Left colon (tissue), 2 donors: ENCODE measurements at regions of chr1 and their contacts with region 1.

Region 1: DNA sequence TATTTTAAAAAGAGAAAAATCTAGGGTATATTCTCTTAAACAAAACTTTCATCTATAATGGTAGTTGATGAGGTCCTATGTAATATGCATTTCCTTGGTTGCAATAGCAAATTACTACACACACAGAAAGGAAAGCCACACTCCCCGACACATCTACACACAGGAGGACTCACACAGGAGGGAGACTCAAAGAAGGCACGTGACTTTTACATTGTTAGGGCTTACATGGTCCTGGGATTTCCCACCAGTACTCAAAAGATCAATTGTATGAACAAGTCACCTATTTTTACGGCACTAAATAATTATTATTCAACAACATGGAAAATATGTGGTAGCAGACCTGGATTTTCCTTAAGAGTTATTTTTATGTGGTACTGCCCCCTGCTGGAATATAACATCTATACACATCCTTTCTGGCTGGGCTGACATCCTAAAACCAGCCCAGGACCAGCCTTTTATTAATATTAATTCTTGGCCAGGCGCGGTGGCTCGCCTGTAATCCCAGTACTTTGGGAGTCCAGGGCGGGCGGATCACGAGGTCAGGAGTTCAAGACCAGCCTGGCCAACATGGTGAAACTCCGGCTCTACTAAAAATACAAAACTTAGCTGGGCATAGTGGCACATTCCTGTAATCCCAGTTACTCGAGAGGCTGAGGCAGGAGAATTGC is 33.9 kb upstream of the LGALS8 start:
- DNase-seq: no peak
- ATAC-seq: peak; percentile 63

Region 2: GRCh38 chr1:236103646-236104218 is 386.1 kb before region 1 on chr1:
- intact Hi-C with region 1: loop called (anchors 2 to 5 kb)
- DNase-seq: peak in 1 of 2 donors; percentile 46
- ATAC-seq: peak; percentile 56

Region 3: GRCh38 chr1:236997882-236998281 is 508.0 kb after region 1 on chr1:
- intact Hi-C with region 1: no loop called
- DNase-seq: no peak
- ATAC-seq: no peak